ENCODE measurements at regions of chr19 and their contacts with region 1.

Region 1: GRCh38 chr19:8208922-8209461 is at the start of gene CERS4:
- DNase-seq: peak; percentile 76 to 81
- ATAC-seq: peak; percentile 79 to 92 (median 79)
- H3K4me3 ChIP-seq: peak within 1 kb of the TSS; percentile 63
- H3K4me3 Mint-ChIP-seq: peak within 1 kb of the TSS; percentile 92
- H3K27ac ChIP-seq: peak within 1 kb of the TSS; percentile 90
- H3K27ac Mint-ChIP-seq: peak within 1 kb of the TSS; percentile 97 to 100
- H3K4me1 ChIP-seq: peaks cover 33% of the 10 kb centered on the region
- H3K4me1 Mint-ChIP-seq: peaks cover 24 to 43% of the 10 kb centered on the region in 2 donors
- H3K27me3 ChIP-seq: no peaks in the 10 kb centered on the region
- H3K27me3 Mint-ChIP-seq: no peaks in the 10 kb centered on the region
- CTCF ChIP-seq: no peak
- total RNA-seq, gene CERS4: 50.0 to 70.8 (median 69.8) TPM

Region 2: DNA sequence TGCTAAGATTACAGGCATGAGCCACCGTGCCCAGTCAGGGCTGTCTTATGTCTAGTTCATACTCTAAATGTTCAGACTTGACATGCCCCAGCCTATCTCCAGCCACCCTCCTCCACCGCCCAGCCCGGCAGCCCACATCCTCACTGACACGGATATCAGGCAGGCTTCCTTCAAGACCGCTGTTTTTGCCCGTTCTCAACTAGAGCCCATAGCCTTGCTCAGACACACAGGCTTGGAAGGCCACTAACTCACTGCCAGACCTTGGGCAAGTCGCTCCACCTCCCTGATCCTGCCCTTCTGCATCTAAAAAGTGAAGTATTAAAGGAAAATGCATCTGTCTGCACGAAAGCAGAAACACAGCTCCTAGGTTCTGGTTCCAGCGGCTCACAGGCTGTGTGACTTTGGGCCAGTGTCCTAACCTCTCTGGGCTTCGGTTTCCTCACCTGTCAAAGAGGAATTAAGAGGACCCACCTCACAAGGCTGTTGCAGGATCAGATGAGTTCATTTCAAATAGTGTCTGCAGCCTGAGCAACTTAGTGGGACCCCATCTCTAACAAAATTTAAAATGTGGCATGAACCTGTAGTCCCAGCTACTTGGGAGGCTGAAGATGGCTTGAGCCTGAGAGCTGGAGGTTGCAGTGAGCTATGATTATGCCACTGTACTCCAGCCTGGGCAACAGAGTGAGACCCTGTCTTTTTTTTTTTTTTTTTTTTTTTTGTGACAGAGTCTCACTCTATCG is 14.3 kb before region 1 on chr19:
- intact Hi-C with region 1: loop called (anchors 1 kb)
- DNase-seq: peak; percentile 70 to 75
- ATAC-seq: peak; percentile 58 to 83 (median 63)
- H3K4me3 ChIP-seq: peak overlapping the region; percentile 22
- H3K4me3 Mint-ChIP-seq: peak overlapping the region; percentile 85
- H3K27ac ChIP-seq: peak overlapping the region; percentile 86
- H3K27ac Mint-ChIP-seq: peak overlapping the region; percentile 98
- H3K4me1 ChIP-seq: peaks cover 52% of the 10 kb centered on the region
- H3K4me1 Mint-ChIP-seq: peaks cover 53 to 59% of the 10 kb centered on the region in 2 donors
- H3K27me3 ChIP-seq: no peaks in the 10 kb centered on the region
- H3K27me3 Mint-ChIP-seq: no peaks in the 10 kb centered on the region
- CTCF ChIP-seq: no peak

Region 3: DNA sequence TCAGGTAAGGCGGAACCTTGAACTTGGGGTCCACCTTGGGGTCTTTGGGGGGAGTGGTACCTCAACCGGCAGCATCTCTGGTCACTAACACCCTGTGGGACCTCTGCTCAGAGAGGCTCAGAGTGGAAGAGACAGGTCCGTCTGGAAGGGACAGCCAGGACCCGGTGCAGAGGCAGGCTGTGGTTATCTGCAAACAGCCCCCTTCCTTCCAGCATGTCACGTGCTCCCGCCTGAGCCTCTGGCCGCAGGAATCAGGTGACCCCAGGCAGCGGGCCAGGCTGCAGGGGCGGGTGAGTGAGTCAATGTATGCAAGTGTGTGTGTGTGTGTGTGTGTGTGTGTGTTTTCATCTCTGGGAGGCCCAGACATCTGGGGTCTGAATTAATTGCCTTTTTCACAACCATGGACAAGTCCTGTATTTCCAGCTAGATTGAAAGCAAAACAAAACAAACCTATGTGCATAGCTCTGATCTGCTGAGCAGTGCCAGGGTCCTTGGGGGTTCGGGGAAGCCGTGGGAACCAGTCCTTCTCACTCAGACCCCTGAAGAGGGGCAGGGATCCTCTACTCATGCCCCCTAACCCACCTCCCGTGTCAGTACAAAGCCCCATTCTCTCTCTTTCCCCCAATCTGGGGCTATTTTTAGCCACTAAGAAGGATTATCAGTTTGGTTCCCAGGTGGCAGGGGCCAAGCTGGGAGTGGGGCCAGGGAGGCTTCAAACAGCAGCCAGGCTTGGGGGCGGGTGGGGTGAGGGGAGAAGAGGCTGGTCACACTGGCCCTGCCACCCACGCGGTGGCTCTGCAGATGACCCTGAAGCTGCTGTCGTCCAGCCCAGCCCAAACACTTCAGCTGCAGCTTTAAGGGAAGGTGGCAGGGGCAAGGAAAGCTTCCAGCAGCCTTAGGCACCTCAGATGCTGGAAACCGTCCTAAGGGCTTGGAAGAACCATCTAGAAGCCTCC is 31.6 kb after region 1 on chr19:
- intact Hi-C with region 1: loop called (anchors 1 kb)
- DNase-seq: peak; percentile 68 to 74
- ATAC-seq: peak; percentile 93 to 99 (median 95)
- H3K4me3 ChIP-seq: no peak overlapping the region
- H3K4me3 Mint-ChIP-seq: peak overlapping the region; percentile 88
- H3K27ac ChIP-seq: peak overlapping the region; percentile 75
- H3K27ac Mint-ChIP-seq: peak overlapping the region; percentile 93 to 95
- H3K4me1 ChIP-seq: peaks cover 26% of the 10 kb centered on the region
- H3K4me1 Mint-ChIP-seq: peaks cover 33 to 48% of the 10 kb centered on the region in 2 donors
- H3K27me3 ChIP-seq: no peaks in the 10 kb centered on the region
- H3K27me3 Mint-ChIP-seq: no peaks in the 10 kb centered on the region
- CTCF ChIP-seq: no peak

Measured in natural killer cell (primary cell).